ENCODE measurements at regions of chr1 and their contacts with region 1.

Region 1: DNA sequence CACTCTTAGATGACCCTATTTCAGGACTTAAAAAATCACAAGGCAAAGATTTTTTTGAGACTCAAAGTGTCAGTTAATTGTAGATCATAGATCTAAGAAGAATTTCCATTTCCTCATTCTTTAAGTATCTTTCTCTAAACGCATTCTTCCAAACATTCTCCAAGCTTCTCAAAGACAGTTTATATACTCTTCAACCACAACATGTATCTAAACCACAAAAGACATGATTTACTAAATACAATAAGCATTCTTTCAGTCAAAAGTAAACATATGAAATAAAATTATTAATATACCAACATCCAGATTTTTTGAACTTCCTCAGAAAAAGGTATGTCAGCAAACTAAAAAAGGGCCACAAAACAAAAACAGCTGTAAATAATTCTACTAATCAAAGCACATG is 24.4 kb downstream of the RC3H1 start:
- DNase-seq: no peak
- ATAC-seq: no peak
- H3K4me3 ChIP-seq: no peak overlapping the region
- H3K4me3 Mint-ChIP-seq: no peak overlapping the region
- H3K27ac ChIP-seq: peak overlapping the region in 1 of 2 experiments; percentile 12
- H3K27ac Mint-ChIP-seq: peak overlapping the region; percentile 25
- H3K4me1 ChIP-seq: peaks cover 12% of the 10 kb centered on the region
- H3K4me1 Mint-ChIP-seq: peaks cover 54% of the 10 kb centered on the region
- H3K27me3 ChIP-seq: no peaks in the 10 kb centered on the region
- H3K27me3 Mint-ChIP-seq: no peaks in the 10 kb centered on the region
- CTCF ChIP-seq: no peak

Region 2: GRCh38 chr1:174040387-174040786 is 42.6 kb after region 1 on chr1:
- CTCF ChIA-PET with region 1: no interaction called
- POLR2A ChIA-PET with region 1: no interaction called
- intact Hi-C with region 1: no loop called
- DNase-seq: no peak
- ATAC-seq: no peak
- H3K4me3 ChIP-seq: no peak overlapping the region
- H3K4me3 Mint-ChIP-seq: no peak overlapping the region
- H3K27ac ChIP-seq: no peak overlapping the region
- H3K27ac Mint-ChIP-seq: no peak overlapping the region
- H3K4me1 ChIP-seq: no peaks in the 10 kb centered on the region
- H3K4me1 Mint-ChIP-seq: no peaks in the 10 kb centered on the region
- H3K27me3 ChIP-seq: no peaks in the 10 kb centered on the region
- H3K27me3 Mint-ChIP-seq: peaks cover 4% of the 10 kb centered on the region
- CTCF ChIP-seq: no peak

Region 3: DNA sequence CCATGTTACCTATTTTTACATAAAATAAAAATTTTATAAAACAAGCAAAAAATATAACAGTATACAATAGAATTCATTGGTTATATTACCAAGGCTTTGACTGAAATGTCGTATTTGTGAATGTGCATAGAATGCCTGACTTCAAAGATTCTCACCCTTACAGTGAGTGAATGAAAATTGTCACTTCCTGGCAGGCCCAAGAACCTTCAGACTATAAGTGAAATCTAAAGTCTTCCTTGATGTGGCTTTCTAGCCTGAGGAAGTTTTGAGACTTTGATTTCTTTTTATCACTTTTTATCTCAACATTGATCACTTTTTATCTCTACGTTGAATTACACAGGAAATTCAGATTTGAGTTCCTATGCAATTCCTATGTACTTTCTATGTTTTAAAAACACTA is 1299.5 kb after region 1 on chr1:
- CTCF ChIA-PET with region 1: no interaction called
- POLR2A ChIA-PET with region 1: no interaction called
- intact Hi-C with region 1: loop called in 1 of 2 experiments (anchors 5 kb)
- DNase-seq: peak in 2 of 9 experiments; percentile 17 to 52
- ATAC-seq: peak; percentile 72
- H3K4me3 ChIP-seq: no peak overlapping the region
- H3K4me3 Mint-ChIP-seq: no peak overlapping the region
- H3K27ac ChIP-seq: no peak overlapping the region
- H3K27ac Mint-ChIP-seq: no peak overlapping the region
- H3K4me1 ChIP-seq: peaks cover 28% of the 10 kb centered on the region
- H3K4me1 Mint-ChIP-seq: peaks cover 36% of the 10 kb centered on the region
- H3K27me3 ChIP-seq: no peaks in the 10 kb centered on the region
- H3K27me3 Mint-ChIP-seq: peaks cover 14% of the 10 kb centered on the region
- CTCF ChIP-seq: no peak

Region 4: DNA sequence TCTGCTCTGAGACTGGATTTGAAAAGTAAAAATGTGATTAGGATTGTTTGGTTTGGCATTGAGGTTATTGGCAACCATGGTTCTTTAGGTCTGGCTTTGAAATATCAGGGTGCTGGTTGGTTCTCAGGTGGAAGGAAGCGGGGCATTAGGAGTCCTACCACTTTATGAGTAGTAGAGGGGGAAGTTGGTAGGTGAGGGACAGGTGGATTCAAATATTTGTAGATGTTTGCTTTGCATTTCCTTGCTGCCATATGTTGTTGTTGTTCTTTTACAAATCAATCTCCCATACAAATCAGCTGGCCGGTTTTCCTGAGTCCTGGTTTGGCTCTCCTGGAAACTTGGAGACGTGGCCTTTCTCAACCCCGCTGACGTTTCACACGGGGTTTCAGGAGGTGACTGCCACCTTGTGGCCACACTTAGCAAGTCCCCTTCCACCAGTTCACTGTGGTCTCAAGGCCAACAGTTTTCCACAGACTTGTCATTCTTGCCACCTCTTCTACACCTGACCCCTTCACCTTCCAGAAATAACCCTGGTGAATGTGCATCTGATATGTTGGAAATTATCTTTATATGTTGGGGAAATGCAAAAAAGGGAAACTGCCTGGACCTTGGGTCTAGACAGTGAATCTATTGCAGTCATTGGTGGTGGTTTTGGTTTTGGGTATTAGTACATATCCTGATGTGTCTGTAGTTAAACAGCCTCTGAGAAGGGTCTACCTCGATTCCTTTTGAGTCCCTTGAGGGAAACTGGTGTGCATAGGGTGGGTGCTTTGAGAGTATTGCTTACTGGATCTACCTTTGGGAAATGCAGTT is 1321.8 kb after region 1 on chr1:
- CTCF ChIA-PET with region 1: no interaction called
- POLR2A ChIA-PET with region 1: no interaction called
- intact Hi-C with region 1: no loop called
- DNase-seq: peak; percentile 45 to 83 (median 71)
- ATAC-seq: peak; percentile 86
- H3K4me3 ChIP-seq: no peak overlapping the region
- H3K4me3 Mint-ChIP-seq: no peak overlapping the region
- H3K27ac ChIP-seq: no peak overlapping the region
- H3K27ac Mint-ChIP-seq: no peak overlapping the region
- H3K4me1 ChIP-seq: peaks cover 6% of the 10 kb centered on the region
- H3K4me1 Mint-ChIP-seq: peaks cover 11% of the 10 kb centered on the region
- H3K27me3 ChIP-seq: no peaks in the 10 kb centered on the region
- H3K27me3 Mint-ChIP-seq: peaks cover 3% of the 10 kb centered on the region
- CTCF ChIP-seq: peak; percentile 86